ENCODE measurements at regions of chr1 and their contacts with region 1.

Region 1: GRCh38 chr1:181033799-181034451 is at the start of gene MR1:
- DNase-seq: peak; percentile 40
- ATAC-seq: peak; percentile 96
- H3K4me3 Mint-ChIP-seq: peak within 1 kb of the TSS; percentile 93
- H3K27ac Mint-ChIP-seq: peak within 1 kb of the TSS; percentile 99
- H3K4me1 Mint-ChIP-seq: peaks cover 53% of the 10 kb centered on the region
- H3K27me3 Mint-ChIP-seq: no peaks in the 10 kb centered on the region
- CTCF ChIP-seq: no peak
- total RNA-seq, gene MR1: 15.7 to 16.7 TPM

Region 2: GRCh38 chr1:181014477-181015250 is 19.3 kb before region 1 on chr1:
- CTCF ChIA-PET with region 1: interaction called, 11 read pairs
- POLR2A ChIA-PET with region 1: interaction called, 3 read pairs
- intact Hi-C with region 1: no loop called
- DNase-seq: peak; percentile 48
- ATAC-seq: peak; percentile 83
- H3K4me3 Mint-ChIP-seq: no peak overlapping the region
- H3K27ac Mint-ChIP-seq: no peak overlapping the region
- H3K4me1 Mint-ChIP-seq: peaks cover 56% of the 10 kb centered on the region
- H3K27me3 Mint-ChIP-seq: no peaks in the 10 kb centered on the region
- CTCF ChIP-seq: no peak

Region 3: GRCh38 chr1:181044449-181044966 is 10.6 kb after region 1 on chr1:
- CTCF ChIA-PET with region 1: interaction called, 8 read pairs
- POLR2A ChIA-PET with region 1: interaction called, 10 read pairs
- intact Hi-C with region 1: no loop called
- DNase-seq: peak; percentile 90
- ATAC-seq: peak; percentile 97
- H3K4me3 Mint-ChIP-seq: peak overlapping the region; percentile 44
- H3K27ac Mint-ChIP-seq: peak overlapping the region; percentile 90
- H3K4me1 Mint-ChIP-seq: peaks cover 47% of the 10 kb centered on the region
- H3K27me3 Mint-ChIP-seq: no peaks in the 10 kb centered on the region
- CTCF ChIP-seq: no peak

Region 4: GRCh38 chr1:181099152-181100014 is 65.5 kb after region 1 on chr1:
- CTCF ChIA-PET with region 1: interaction called, 13 read pairs
- POLR2A ChIA-PET with region 1: interaction called, 5 read pairs
- intact Hi-C with region 1: no loop called
- DNase-seq: peak; percentile 69
- ATAC-seq: peak; percentile 75
- H3K4me3 Mint-ChIP-seq: peak overlapping the region; percentile 56
- H3K27ac Mint-ChIP-seq: peak overlapping the region; percentile 96
- H3K4me1 Mint-ChIP-seq: peaks cover 78% of the 10 kb centered on the region
- H3K27me3 Mint-ChIP-seq: no peaks in the 10 kb centered on the region
- CTCF ChIP-seq: no peak

Region 5: GRCh38 chr1:181166377-181167196 is 132.7 kb after region 1 on chr1:
- CTCF ChIA-PET with region 1: interaction called, 15 read pairs
- POLR2A ChIA-PET with region 1: no interaction called
- intact Hi-C with region 1: no loop called
- DNase-seq: peak; percentile 88
- ATAC-seq: peak; percentile 100
- H3K4me3 Mint-ChIP-seq: no peak overlapping the region
- H3K27ac Mint-ChIP-seq: peak overlapping the region; percentile 71
- H3K4me1 Mint-ChIP-seq: peaks cover 4% of the 10 kb centered on the region
- H3K27me3 Mint-ChIP-seq: no peaks in the 10 kb centered on the region
- CTCF ChIP-seq: peak; percentile 92

Measured in activated CD8-positive, alpha-beta T cell treated with anti-CD3 and anti-CD28 coated beads for 36 hours (primary cell).